ENCODE measurements at regions of chr2 and their contacts with region 1.

Region 1: GRCh38 chr2:65411056-65411795 is 21.2 kb downstream of the SPRED2 start:
- DNase-seq: peak in 1 of 2 experiments; percentile 36
- H3K4me3 ChIP-seq: no peak overlapping the region
- H3K27ac ChIP-seq: no peak overlapping the region
- H3K4me1 ChIP-seq: peaks cover 23% of the 10 kb centered on the region
- H3K27me3 ChIP-seq: no peaks in the 10 kb centered on the region
- CTCF ChIP-seq: no peak

Region 2: GRCh38 chr2:65116645-65117044 is 294.6 kb before region 1 on chr2:
- CTCF ChIA-PET with region 1: no interaction called
- POLR2A ChIA-PET with region 1: interaction called, 12 read pairs
- intact Hi-C with region 1: no loop called
- DNase-seq: no peak
- H3K4me3 ChIP-seq: no peak overlapping the region
- H3K27ac ChIP-seq: no peak overlapping the region
- H3K4me1 ChIP-seq: no peaks in the 10 kb centered on the region
- H3K27me3 ChIP-seq: no peaks in the 10 kb centered on the region
- CTCF ChIP-seq: no peak

Measured in PC-9 (cell line).